ENCODE measurements at regions of chr14 and their contacts with region 1.

Region 1: GRCh38 chr14:52473557-52473956 is 78.7 kb downstream of the TXNDC16 start:
- DNase-seq: peak in 1 of 2 experiments; percentile 41
- H3K4me3 ChIP-seq: no peak overlapping the region
- H3K27ac ChIP-seq: no peak overlapping the region
- H3K4me1 ChIP-seq: no peaks in the 10 kb centered on the region
- H3K27me3 ChIP-seq: no peaks in the 10 kb centered on the region
- CTCF ChIP-seq: peak; percentile 69

Region 2: DNA sequence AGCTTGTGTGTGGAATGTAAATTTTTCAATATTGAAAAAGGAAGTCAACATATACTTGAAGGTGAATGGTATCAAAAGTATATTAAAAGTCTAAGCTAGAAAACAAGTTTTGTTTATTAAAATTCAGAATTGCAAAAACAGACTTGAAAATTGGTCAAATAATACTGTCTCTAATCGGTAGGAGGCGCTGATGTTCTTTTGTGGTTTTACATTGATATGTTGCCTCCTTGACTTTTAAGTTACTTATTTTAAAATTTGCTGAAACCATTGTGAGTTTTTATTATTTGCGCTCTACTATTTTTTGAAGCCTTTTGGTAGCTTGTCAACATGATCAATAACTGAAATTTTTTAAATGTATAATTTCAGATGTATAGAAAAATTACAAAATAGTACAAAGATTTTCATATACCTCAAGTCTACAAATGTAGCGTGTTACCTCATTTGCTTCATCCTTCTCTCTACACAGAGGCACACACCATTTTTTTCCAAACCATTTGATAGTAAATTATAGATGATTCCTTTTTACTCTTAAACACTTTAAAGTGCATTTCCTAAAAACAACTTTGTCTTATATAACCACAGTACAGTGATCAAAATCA is 477.3 kb before region 1 on chr14:
- CTCF ChIA-PET with region 1: no interaction called
- POLR2A ChIA-PET with region 1: no interaction called
- intact Hi-C with region 1: loop called (anchors 5 kb)
- DNase-seq: no peak
- H3K4me3 ChIP-seq: no peak overlapping the region
- H3K27ac ChIP-seq: no peak overlapping the region
- H3K4me1 ChIP-seq: peaks cover under 1% of the 10 kb centered on the region; the same call in 1 of the 2 replicates
- H3K27me3 ChIP-seq: no peaks in the 10 kb centered on the region
- CTCF ChIP-seq: peak; percentile 86

Region 3: GRCh38 chr14:52299692-52300278 is 173.8 kb before region 1 on chr14:
- CTCF ChIA-PET with region 1: interaction called, 3 read pairs
- POLR2A ChIA-PET with region 1: no interaction called
- intact Hi-C with region 1: loop called (anchors 1 kb)
- DNase-seq: peak in 1 of 2 experiments; percentile 58
- H3K4me3 ChIP-seq: no peak overlapping the region
- H3K27ac ChIP-seq: no peak overlapping the region
- H3K4me1 ChIP-seq: no peaks in the 10 kb centered on the region
- H3K27me3 ChIP-seq: no peaks in the 10 kb centered on the region
- CTCF ChIP-seq: peak; percentile 86

Measured in PC-9 (cell line).